Caco-2 (cell line): ENCODE measurements at regions of chr1 and their contacts with region 1.

Region 1: DNA sequence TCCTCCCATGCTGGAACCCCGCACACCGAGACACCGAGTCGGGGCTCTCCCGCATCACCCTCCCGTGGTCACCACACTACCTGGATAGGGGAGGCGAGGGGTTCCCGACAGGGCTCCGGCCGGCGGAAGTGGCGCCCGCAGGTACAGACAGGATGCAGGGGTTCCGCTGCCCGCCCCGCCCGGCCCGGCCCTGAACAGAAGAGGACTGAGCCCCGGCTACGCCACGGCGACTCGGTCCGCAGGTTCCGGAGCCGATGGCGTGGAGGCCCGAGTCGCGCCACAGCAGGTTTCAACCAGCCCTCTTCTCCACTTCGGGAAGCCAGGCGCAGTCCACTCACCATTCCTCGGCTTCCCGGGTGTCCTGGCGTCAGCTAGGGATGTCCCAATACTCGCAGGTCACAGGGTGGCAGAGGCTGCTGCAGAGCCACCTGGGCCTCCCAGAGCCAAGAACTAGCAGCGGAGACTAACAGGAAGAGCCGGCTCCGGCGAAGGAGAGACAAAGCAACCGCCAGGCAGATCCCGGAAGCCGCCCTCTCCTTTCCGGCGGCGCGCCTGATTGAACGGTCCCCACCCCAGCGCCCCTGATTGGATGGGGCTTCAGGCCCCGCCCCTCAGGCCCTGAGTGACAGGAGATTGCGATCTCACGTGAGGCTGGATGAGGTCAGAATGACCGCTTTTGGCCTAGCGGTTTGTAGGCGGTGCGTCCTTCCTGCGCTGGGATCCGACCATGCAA is at the start of gene ZNF669:
- DNase-seq: peak; percentile 97 to 98
- H3K4me3 ChIP-seq: peak within 1 kb of the TSS; percentile 53
- H3K4me3 Mint-ChIP-seq: peak within 1 kb of the TSS; percentile 83
- H3K27ac Mint-ChIP-seq: peak within 1 kb of the TSS; percentile 64
- H3K4me1 ChIP-seq: no peaks in the 10 kb centered on the region
- H3K4me1 Mint-ChIP-seq: no peaks in the 10 kb centered on the region
- H3K27me3 ChIP-seq: no peaks in the 10 kb centered on the region
- H3K27me3 Mint-ChIP-seq: no peaks in the 10 kb centered on the region
- CTCF ChIP-seq: no peak
- total RNA-seq, gene ZNF669: 8.3 and 9.1 TPM in 2 replicates

Region 2: GRCh38 chr1:246931549-246932365 is 172.3 kb before region 1 on chr1 and contains the start of gene AHCTF1:
- CTCF ChIA-PET with region 1: no interaction called
- POLR2A ChIA-PET with region 1: no interaction called
- intact Hi-C with region 1: loop called (anchors 1 kb)
- DNase-seq: peak; percentile 97
- H3K4me3 ChIP-seq: peak within 1 kb of the TSS; percentile 95
- H3K4me3 Mint-ChIP-seq: peak within 1 kb of the TSS; percentile 95
- H3K27ac Mint-ChIP-seq: peak within 1 kb of the TSS; percentile 95
- H3K4me1 ChIP-seq: peaks cover 10% of the 10 kb centered on the region
- H3K4me1 Mint-ChIP-seq: peaks cover 7% of the 10 kb centered on the region
- H3K27me3 ChIP-seq: no peaks in the 10 kb centered on the region
- H3K27me3 Mint-ChIP-seq: no peaks in the 10 kb centered on the region
- CTCF ChIP-seq: no peak
- total RNA-seq, gene AHCTF1: 42.3 and 48.7 TPM in 2 replicates

Region 3: GRCh38 chr1:247007511-247008405 is 96.3 kb before region 1 on chr1 and contains the start of gene ZNF695:
- CTCF ChIA-PET with region 1: no interaction called
- POLR2A ChIA-PET with region 1: no interaction called
- intact Hi-C with region 1: loop called (anchors 5 kb)
- DNase-seq: peak; percentile 98
- H3K4me3 ChIP-seq: peak within 1 kb of the TSS; percentile 97
- H3K4me3 Mint-ChIP-seq: peak within 1 kb of the TSS; percentile 95
- H3K27ac Mint-ChIP-seq: peak within 1 kb of the TSS; percentile 99
- H3K4me1 ChIP-seq: 0 out of 2 replicates have a peak, but pooled peaks cover 5% of the 10 kb centered on the region
- H3K4me1 Mint-ChIP-seq: no peaks in the 10 kb centered on the region
- H3K27me3 ChIP-seq: no peaks in the 10 kb centered on the region
- H3K27me3 Mint-ChIP-seq: no peaks in the 10 kb centered on the region
- CTCF ChIP-seq: no peak
- total RNA-seq, gene ZNF695: 24.7 and 25.2 TPM in 2 replicates

Region 4: DNA sequence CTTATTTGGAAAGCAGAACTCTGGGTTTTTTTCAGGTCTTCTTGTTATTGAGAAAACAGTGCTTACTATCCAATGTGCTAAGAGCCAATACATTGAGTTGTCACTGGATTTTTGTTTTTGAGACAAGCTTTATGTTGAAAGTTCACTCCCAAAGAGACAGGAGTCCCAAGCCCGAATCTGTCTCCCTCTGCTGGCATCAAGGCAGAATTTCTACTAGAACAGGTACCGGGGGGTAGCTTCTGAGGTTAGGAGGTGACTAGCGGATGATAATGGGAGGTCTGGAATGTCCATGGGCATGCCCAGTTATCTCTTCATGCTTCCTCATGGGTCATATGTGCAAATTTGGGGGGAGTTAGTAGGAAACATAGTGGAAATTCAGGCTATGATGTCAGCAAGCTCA is 42.6 kb after region 1 on chr1:
- CTCF ChIA-PET with region 1: no interaction called
- POLR2A ChIA-PET with region 1: no interaction called
- intact Hi-C with region 1: loop called (anchors 5 kb)
- DNase-seq: peak in 1 of 2 experiments; percentile 17
- H3K4me3 ChIP-seq: no peak overlapping the region
- H3K4me3 Mint-ChIP-seq: no peak overlapping the region
- H3K27ac Mint-ChIP-seq: no peak overlapping the region
- H3K4me1 ChIP-seq: no peaks in the 10 kb centered on the region
- H3K4me1 Mint-ChIP-seq: no peaks in the 10 kb centered on the region
- H3K27me3 ChIP-seq: no peaks in the 10 kb centered on the region
- H3K27me3 Mint-ChIP-seq: no peaks in the 10 kb centered on the region
- CTCF ChIP-seq: peak in 1 of 2 experiments; percentile 34